ENCODE measurements at regions of chr4 and their contacts with region 1.

Region 1: GRCh38 chr4:155442267-155443105 is 65.7 kb upstream of the MAP9 start:
- DNase-seq: peak in 1 of 2 experiments; percentile 66
- H3K4me3 ChIP-seq: no peak overlapping the region
- H3K27ac ChIP-seq: no peak overlapping the region
- H3K4me1 ChIP-seq: no peaks in the 10 kb centered on the region
- H3K27me3 ChIP-seq: no peaks in the 10 kb centered on the region
- CTCF ChIP-seq: peak; percentile 81

Region 2: DNA sequence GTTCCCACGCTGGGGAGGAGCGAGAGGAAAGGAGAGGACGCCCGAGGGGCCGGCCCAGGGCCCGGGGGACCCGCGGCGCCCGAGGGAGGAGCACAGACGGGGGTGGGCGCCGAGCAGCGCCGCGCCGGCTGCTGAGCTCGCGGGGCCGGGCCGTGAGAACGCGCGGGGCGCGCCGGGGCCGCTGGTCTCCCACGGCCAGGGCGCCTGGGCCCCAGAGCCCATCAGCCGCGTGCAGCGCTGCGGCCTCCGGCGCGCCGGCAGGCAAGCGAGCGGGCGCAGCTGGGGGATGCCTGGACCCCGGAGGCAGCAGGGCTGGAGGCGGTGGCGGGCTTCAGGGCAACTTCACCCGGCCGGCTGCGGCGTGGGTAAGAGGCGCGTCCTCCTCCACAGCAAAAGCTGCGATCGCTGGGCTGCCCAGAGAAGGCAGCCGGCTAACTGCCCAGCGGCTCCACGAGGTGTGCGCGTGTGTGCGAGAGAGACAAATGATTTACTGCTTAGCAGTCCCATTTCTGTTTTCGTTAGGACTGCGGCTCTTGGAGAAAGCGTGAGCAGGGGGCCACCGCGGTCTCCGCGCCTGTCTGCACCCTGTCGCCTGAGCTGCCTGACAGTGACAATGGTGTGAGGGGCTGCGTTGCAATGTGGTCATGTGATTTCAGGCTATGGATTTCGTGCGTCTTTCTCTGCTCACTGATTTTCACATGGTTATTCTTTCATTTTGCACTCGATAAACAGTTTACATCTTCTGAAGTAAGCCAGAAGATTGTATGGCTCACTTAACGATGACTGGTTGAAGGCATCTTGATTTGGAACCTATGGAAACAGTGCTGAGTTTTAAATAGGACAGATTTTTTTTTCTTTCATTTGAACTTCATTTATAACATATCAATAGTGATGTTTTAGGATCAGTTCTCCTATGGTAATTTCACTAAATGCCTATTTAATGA is 225.4 kb after region 1 on chr4:
- CTCF ChIA-PET with region 1: no interaction called
- POLR2A ChIA-PET with region 1: no interaction called
- intact Hi-C with region 1: loop called (anchors 5 kb)
- DNase-seq: peak in 1 of 2 experiments; percentile 19
- H3K4me3 ChIP-seq: peak overlapping the region; percentile 63
- H3K27ac ChIP-seq: no peak overlapping the region
- H3K4me1 ChIP-seq: no peaks in the 10 kb centered on the region
- H3K27me3 ChIP-seq: peaks cover 9% of the 10 kb centered on the region
- CTCF ChIP-seq: no peak

Region 3: GRCh38 chr4:155787113-155787710 is 344.7 kb after region 1 on chr4:
- CTCF ChIA-PET with region 1: no interaction called
- POLR2A ChIA-PET with region 1: no interaction called
- intact Hi-C with region 1: loop called (anchors 1 kb)
- DNase-seq: peak in 1 of 2 experiments; percentile 11
- H3K4me3 ChIP-seq: no peak overlapping the region
- H3K27ac ChIP-seq: no peak overlapping the region
- H3K4me1 ChIP-seq: no peaks in the 10 kb centered on the region
- H3K27me3 ChIP-seq: no peaks in the 10 kb centered on the region
- CTCF ChIP-seq: peak; percentile 58

Region 4: GRCh38 chr4:155953151-155954114 is 510.9 kb after region 1 on chr4 and contains the start of gene CTSO:
- CTCF ChIA-PET with region 1: no interaction called
- POLR2A ChIA-PET with region 1: no interaction called
- intact Hi-C with region 1: loop called (anchors 2 kb)
- DNase-seq: peak; percentile 44 to 63
- H3K4me3 ChIP-seq: peak within 1 kb of the TSS; percentile 75
- H3K27ac ChIP-seq: peak within 1 kb of the TSS; percentile 55
- H3K4me1 ChIP-seq: no peaks in the 10 kb centered on the region
- H3K27me3 ChIP-seq: no peaks in the 10 kb centered on the region
- CTCF ChIP-seq: peak; percentile 71
- total RNA-seq, gene CTSO: 4.8 and 5.0 TPM in 2 replicates

Measured in PC-9 (cell line).